ENCODE measurements at regions of chr5 and their contacts with region 1.

Region 1: GRCh38 chr5:151239237-151239861 is 13.6 kb upstream of the GM2A start:
- DNase-seq: peak; percentile 88
- ATAC-seq: peak; percentile 84
- H3K4me3 ChIP-seq: peak overlapping the region; percentile 17
- H3K27ac ChIP-seq: no peak overlapping the region
- H3K4me1 ChIP-seq: peaks cover 14% of the 10 kb centered on the region
- H3K27me3 ChIP-seq: no peaks in the 10 kb centered on the region
- CTCF ChIP-seq: peak; percentile 98

Region 2: DNA sequence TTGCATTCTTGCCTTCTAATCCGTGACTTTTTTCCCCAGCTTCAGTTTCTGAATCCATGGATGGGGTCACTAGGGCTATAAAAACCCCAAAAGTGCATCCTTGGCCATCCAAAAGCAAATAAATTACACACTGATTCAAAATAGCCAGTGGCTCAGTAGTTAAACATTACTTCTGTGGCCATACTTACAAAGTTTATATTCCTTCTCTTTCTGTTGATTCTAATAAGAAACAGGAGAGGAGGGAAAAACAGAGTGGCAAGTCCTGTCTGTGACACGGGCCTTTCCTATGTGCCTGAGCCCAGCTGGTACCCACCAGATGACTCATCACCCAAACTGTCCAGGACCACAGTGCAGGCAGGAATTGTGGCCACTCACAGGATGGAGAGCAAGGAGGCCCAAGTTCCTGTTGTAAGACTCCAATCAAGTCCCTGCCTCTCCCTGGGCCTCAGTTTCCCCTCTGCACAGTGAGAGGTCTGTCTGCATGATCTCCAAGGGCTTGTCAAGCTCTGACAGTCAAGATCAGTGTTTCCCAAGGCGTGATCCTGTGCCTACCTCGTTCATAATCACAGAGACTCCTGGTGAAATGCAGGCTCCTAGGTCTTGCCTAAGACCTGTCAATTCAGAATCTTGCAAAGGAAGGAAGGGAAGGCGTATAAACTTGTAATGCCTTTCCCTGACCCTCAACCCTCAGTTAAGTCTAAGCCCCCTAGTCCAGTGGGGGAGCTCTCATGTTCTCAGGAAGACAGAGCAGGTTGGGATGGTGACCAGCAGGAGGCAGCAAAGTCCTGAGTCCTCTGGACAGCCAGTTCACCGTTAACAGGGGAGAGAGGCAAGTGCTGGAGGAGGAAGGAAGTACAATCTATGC is 188.1 kb before region 1 on chr5:
- intact Hi-C with region 1: loop called (anchors 10 kb)
- DNase-seq: peak; percentile 84
- ATAC-seq: peak; percentile 94
- H3K4me3 ChIP-seq: no peak overlapping the region
- H3K27ac ChIP-seq: peak overlapping the region; percentile 73
- H3K4me1 ChIP-seq: peaks cover 8% of the 10 kb centered on the region
- H3K27me3 ChIP-seq: no peaks in the 10 kb centered on the region
- CTCF ChIP-seq: peak; percentile 89

Region 3: GRCh38 chr5:151126199-151126645 is 113.1 kb before region 1 on chr5:
- intact Hi-C with region 1: loop called (anchors 10 kb)
- DNase-seq: peak; percentile 89
- ATAC-seq: peak; percentile 87
- H3K4me3 ChIP-seq: no peak overlapping the region
- H3K27ac ChIP-seq: no peak overlapping the region
- H3K4me1 ChIP-seq: peaks cover 9% of the 10 kb centered on the region
- H3K27me3 ChIP-seq: no peaks in the 10 kb centered on the region
- CTCF ChIP-seq: peak; percentile 81

Region 4: DNA sequence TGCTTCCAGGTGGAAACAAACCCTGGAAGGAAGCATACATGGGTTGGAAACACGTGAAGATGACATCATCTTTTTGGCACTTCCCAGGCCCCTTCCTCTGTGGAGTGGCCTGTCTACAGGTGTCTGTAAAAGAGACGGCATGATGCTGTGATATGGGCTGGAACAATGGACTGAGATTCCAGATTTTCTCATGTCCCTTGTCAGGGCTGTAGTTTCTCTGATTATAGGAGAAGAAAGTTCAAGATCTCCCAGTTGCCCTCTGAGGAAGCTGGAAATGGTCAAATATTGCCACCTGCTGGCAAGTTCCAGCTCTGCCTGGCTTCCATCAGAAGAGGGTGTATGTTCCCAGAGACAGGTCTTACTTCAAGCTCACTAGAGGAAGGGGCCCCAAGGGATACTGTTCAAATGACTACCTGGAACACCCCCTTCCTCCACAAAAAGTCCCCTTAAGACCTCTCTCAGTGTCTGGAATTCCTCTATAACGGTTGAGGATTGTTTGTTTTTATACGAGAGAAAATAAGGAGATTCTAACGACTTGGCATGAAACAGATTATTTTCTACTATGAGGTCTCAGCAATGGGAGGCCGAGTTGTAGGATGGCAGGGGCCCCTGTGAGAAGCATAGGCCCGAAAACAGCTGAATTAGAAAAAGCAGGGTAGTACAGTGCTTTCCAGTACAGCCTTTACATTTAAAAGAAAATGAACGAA is 74.5 kb before region 1 on chr5:
- intact Hi-C with region 1: loop called (anchors 10 kb)
- DNase-seq: peak; percentile 72
- ATAC-seq: peak; percentile 97
- H3K4me3 ChIP-seq: no peak overlapping the region
- H3K27ac ChIP-seq: no peak overlapping the region
- H3K4me1 ChIP-seq: peaks cover 5% of the 10 kb centered on the region
- H3K27me3 ChIP-seq: no peaks in the 10 kb centered on the region
- CTCF ChIP-seq: peak; percentile 94

Measured in upper lobe of right lung (tissue), 1 donor.